ENCODE measurements at regions of chr11 and their contacts with region 1.

Region 1: DNA sequence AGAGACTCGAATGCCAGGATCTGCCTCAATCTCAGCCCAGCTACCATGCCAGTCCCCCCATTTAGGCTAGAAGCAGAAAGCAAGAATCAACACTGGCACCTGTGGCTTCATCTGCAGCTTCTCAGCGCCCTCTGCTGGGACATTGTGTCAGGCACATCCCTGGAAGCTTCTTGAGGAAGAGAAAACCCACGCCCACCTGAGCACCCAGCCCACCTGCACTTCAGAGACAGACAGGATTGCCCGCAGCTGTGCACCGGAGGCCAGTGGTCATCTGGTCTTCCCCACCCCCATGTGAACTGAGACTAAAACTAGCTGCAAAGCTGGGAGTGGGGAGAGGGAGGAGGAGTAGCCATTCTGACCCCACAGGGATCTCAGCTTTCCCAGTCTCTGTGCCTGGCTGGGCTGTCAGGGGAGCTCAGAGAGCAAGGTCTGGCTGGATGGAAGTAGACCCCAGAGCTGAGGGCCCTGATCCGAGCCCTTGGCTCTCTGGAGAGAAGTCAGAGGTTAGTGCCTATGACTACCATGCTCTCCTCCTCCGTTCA is 66.8 kb downstream of the FEZ1 start:
- DNase-seq: peak; percentile 64
- H3K4me3 Mint-ChIP-seq: no peak overlapping the region
- H3K27ac Mint-ChIP-seq: no peak overlapping the region
- H3K4me1 Mint-ChIP-seq: no peaks in the 10 kb centered on the region
- H3K27me3 Mint-ChIP-seq: peaks cover 24% of the 10 kb centered on the region
- CTCF ChIP-seq: peak; percentile 65

Region 2: DNA sequence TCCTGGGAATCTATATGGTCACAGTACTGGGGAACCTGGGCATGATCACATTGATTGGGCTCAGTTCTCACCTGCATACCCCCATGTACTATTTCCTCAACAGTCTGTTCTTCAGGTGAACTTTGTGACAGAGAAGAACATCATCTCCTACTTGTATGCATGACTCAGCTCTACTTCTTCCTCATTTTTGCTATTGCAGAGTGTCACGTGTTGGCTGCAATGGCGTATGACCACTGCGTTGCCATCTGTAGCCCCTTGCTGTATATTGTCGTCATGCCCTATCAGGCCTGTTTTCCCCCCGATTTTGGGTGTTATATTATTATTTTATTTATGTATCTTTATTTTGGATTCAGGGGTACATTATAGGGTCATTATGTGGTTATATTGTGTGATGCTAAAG is 1190.7 kb before region 1 on chr11:
- CTCF ChIA-PET with region 1: no interaction called
- POLR2A ChIA-PET with region 1: no interaction called
- intact Hi-C with region 1: no loop called
- DNase-seq: no peak
- H3K4me3 Mint-ChIP-seq: no peak overlapping the region
- H3K27ac Mint-ChIP-seq: no peak overlapping the region
- H3K4me1 Mint-ChIP-seq: no peaks in the 10 kb centered on the region
- H3K27me3 Mint-ChIP-seq: peaks cover 45% of the 10 kb centered on the region
- CTCF ChIP-seq: no peak

Region 3: DNA sequence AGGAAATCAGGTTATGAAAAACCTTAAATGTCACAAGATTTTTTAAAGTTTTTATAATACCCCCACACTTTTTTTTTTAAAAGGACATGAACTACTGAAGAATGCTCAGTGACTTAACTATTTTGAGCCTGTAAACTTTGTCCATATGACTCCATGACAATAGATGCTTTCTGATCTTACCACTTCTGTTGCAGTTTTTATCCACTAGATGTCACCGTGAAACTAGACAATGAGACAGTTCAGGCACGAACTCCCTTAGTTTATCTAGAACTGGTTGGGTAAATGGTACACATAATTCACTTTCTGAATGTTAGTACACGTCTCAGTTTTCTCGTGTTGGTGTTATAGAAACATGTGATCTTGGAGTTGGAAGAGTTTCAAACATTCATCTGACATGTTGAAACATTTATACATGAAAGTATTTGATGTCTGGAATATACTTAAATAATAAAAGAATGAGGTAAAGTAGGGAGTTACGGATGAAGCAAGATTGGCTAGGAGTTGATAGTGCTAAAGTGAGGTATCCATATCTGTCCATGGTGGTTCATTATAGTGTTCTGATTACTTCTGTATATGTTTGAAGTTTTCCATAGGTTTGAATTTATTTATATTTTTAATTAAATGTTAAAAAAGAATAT is 467.1 kb before region 1 on chr11:
- CTCF ChIA-PET with region 1: interaction called, 11 read pairs
- POLR2A ChIA-PET with region 1: no interaction called
- intact Hi-C with region 1: loop called (anchors 1 kb)
- DNase-seq: peak; percentile 85
- H3K4me3 Mint-ChIP-seq: no peak overlapping the region
- H3K27ac Mint-ChIP-seq: no peak overlapping the region
- H3K4me1 Mint-ChIP-seq: no peaks in the 10 kb centered on the region
- H3K27me3 Mint-ChIP-seq: no peaks in the 10 kb centered on the region
- CTCF ChIP-seq: peak; percentile 69

Region 4: GRCh38 chr11:125413226-125413625 is 16.0 kb before region 1 on chr11:
- CTCF ChIA-PET with region 1: interaction called, 29 read pairs
- POLR2A ChIA-PET with region 1: no interaction called
- intact Hi-C with region 1: no loop called
- DNase-seq: no peak
- H3K4me3 Mint-ChIP-seq: no peak overlapping the region
- H3K27ac Mint-ChIP-seq: no peak overlapping the region
- H3K4me1 Mint-ChIP-seq: no peaks in the 10 kb centered on the region
- H3K27me3 Mint-ChIP-seq: peaks cover 31% of the 10 kb centered on the region
- CTCF ChIP-seq: no peak

Region 5: GRCh38 chr11:125451400-125452124 is 22.3 kb after region 1 on chr11:
- CTCF ChIA-PET with region 1: interaction called, 12 read pairs
- POLR2A ChIA-PET with region 1: no interaction called
- intact Hi-C with region 1: no loop called
- DNase-seq: peak; percentile 5
- H3K4me3 Mint-ChIP-seq: no peak overlapping the region
- H3K27ac Mint-ChIP-seq: no peak overlapping the region
- H3K4me1 Mint-ChIP-seq: no peaks in the 10 kb centered on the region
- H3K27me3 Mint-ChIP-seq: no peaks in the 10 kb centered on the region
- CTCF ChIP-seq: no peak

Region 6: GRCh38 chr11:125603207-125603606 is 174.0 kb after region 1 on chr11:
- CTCF ChIA-PET with region 1: no interaction called
- POLR2A ChIA-PET with region 1: no interaction called
- intact Hi-C with region 1: no loop called
- DNase-seq: no peak
- H3K4me3 Mint-ChIP-seq: no peak overlapping the region
- H3K27ac Mint-ChIP-seq: no peak overlapping the region
- H3K4me1 Mint-ChIP-seq: no peaks in the 10 kb centered on the region
- H3K27me3 Mint-ChIP-seq: no peaks in the 10 kb centered on the region
- CTCF ChIP-seq: no peak

Region 7: GRCh38 chr11:125874556-125875124 is 445.4 kb after region 1 on chr11:
- CTCF ChIA-PET with region 1: interaction called, 3 read pairs
- POLR2A ChIA-PET with region 1: no interaction called
- intact Hi-C with region 1: loop called (anchors 1 kb)
- DNase-seq: peak; percentile 81
- H3K4me3 Mint-ChIP-seq: no peak overlapping the region
- H3K27ac Mint-ChIP-seq: no peak overlapping the region
- H3K4me1 Mint-ChIP-seq: no peaks in the 10 kb centered on the region
- H3K27me3 Mint-ChIP-seq: no peaks in the 10 kb centered on the region
- CTCF ChIP-seq: peak; percentile 86